CD8-positive, alpha-beta T cell (primary cell): ENCODE measurements at regions of chr10 and their contacts with region 1.

Region 1: DNA sequence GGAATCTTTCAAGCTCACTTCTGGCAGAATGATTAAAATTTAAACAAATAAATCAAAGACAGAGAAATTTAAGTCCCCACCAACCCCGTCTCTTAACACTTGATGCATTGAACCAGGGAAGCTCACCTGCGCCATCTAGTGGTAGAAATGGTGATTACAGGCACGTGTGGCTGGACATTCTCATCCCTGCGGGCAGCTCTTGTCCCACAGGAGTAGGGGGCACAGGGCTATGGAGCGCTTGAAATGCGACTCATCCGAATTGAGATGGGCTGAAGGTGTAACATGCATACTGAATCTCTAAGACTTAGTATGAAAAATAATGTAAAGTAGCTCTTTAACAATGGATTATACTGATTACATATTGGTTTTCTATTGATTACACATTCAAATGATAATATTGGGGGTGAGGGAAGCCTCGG is 24.8 kb upstream of the SLIT1 start:
- DNase-seq: peak; percentile 47 to 82 (median 71)
- ATAC-seq: peak; percentile 52
- H3K4me3 ChIP-seq: no peak overlapping the region
- H3K4me3 Mint-ChIP-seq: no peak overlapping the region
- H3K27ac ChIP-seq: no peak overlapping the region
- H3K27ac Mint-ChIP-seq: no peak overlapping the region
- H3K4me1 ChIP-seq: no peaks in the 10 kb centered on the region
- H3K4me1 Mint-ChIP-seq: no peaks in the 10 kb centered on the region
- H3K27me3 ChIP-seq: no peaks in the 10 kb centered on the region
- H3K27me3 Mint-ChIP-seq: peaks cover 1% of the 10 kb centered on the region
- CTCF ChIP-seq: peak; percentile 98

Region 2: DNA sequence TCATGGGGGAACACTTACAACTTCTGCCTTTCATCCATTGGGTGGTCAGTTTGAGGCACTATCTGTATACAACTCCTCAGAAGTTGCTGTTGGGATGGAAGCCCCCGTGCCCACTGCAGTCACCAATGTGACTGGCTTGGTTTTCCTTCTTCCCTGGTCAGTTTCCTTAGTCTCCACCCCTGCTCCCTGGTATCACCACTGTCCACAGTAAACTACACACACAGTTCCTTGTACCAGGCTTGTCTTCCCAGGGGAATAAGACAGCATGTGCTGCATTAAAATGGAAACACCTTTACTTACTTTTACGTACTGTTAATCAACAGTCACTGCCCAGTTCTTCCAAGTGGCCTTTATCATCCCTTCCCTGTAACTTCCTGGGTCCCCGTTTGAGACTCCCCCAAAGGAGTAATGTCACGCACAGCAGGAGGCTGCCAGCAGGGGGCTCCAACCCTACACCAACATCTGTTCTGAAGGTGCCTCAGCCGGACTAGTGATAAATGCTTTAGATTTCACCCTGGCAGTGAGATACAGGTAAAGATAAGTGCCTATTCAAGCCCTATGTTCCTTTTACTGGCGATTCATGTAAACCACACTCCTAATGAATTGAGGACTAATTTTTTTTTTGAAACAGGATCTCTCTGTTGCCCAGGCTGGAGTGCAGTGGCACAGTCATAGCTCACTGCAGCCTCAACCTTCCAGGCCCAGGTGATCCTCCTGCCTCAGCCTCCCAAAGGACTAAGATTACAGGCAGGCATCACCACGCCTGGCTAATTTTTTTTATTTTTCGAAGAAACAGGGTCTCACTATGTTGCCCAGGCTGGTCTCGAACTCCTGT is 444.9 kb before region 1 on chr10:
- CTCF ChIA-PET with region 1: interaction called, 5 read pairs
- POLR2A ChIA-PET with region 1: no interaction called
- intact Hi-C with region 1: loop called (anchors 1 to 10 kb)
- DNase-seq: peak; percentile 53 to 83 (median 78)
- ATAC-seq: peak; percentile 94
- H3K4me3 ChIP-seq: no peak overlapping the region
- H3K4me3 Mint-ChIP-seq: no peak overlapping the region
- H3K27ac ChIP-seq: no peak overlapping the region
- H3K27ac Mint-ChIP-seq: no peak overlapping the region
- H3K4me1 ChIP-seq: no peaks in the 10 kb centered on the region
- H3K4me1 Mint-ChIP-seq: no peaks in the 10 kb centered on the region
- H3K27me3 ChIP-seq: no peaks in the 10 kb centered on the region
- H3K27me3 Mint-ChIP-seq: no peaks in the 10 kb centered on the region
- CTCF ChIP-seq: peak; percentile 78

Region 3: DNA sequence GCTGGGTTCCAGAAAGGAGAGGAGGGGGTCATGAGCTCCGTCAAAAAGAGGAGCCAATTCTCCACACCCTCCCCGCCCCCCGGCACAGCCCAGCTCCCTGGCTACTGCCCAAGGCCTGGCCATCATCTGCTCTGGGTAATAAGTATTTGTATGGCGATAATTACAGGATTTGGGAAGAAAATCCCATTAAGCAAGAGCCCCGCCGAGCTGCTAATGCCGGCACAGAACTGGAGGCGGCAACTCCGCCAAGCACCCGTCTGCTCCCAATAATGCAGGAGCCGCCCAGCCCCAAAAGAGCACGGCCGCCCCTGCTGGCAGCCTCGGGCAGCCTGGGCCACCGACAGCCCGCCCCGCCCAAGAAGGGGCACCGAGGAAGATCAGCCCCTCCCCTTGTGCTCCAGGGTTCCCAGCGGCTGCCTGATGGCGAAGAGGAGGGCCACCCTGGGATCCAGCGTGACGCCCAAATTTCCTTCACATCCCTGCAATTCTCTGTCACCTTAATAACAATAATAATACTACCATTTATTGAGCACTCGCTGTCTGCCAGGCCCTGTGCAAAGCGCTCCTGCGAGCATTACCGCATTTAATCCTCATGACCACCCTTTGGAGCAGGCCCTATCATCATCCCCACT is 30.7 kb before region 1 on chr10:
- CTCF ChIA-PET with region 1: interaction called, 10 read pairs
- POLR2A ChIA-PET with region 1: no interaction called
- intact Hi-C with region 1: no loop called
- DNase-seq: no peak
- ATAC-seq: no peak
- H3K4me3 ChIP-seq: no peak overlapping the region
- H3K4me3 Mint-ChIP-seq: no peak overlapping the region
- H3K27ac ChIP-seq: no peak overlapping the region
- H3K27ac Mint-ChIP-seq: no peak overlapping the region
- H3K4me1 ChIP-seq: no peaks in the 10 kb centered on the region
- H3K4me1 Mint-ChIP-seq: peaks cover 6% of the 10 kb centered on the region
- H3K27me3 ChIP-seq: peaks cover 0 to 2% of the 10 kb centered on the region in 2 experiments
- H3K27me3 Mint-ChIP-seq: peaks cover 36% of the 10 kb centered on the region
- CTCF ChIP-seq: no peak

Region 4: DNA sequence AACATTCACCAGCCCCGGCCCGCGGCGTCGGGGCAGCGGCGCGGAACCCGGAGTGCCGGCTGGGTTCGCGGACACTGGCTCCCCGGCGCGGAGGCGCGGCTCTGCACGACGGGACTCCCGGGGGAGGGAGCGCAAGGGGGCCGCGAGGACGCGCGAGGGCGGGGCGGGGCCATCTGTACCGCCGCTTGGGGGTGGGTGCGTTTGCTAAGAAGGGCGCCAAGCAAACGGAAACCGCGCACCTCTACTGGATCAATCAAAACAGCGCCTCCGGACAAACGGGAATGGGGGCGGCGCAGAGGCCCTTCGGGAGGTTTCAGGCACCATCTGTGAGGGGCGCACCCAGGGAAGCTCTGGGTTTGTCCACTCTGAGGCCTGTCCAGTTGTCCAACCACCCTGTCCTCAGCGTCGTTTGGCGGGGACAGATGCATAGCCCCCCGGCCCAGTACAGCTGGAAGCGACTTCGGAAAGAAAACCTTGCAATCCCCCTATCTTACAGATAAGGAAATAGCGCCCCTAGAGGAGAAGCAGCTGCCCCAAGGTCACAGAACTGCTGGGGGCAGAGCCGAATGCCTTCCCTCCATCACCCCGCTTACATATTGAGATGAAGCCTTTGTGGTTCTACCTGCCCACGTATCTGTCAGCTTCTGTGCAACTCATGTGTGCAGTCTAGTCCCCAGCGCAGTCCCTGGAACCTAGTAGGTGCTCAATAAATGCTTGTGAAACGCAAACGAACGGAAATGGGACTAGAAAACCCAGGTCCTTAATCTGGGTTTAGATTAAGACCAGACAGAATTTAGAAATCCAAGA is 14.1 kb before region 1 on chr10:
- CTCF ChIA-PET with region 1: interaction called, 127 read pairs
- POLR2A ChIA-PET with region 1: interaction called, 3 read pairs
- intact Hi-C with region 1: no loop called
- DNase-seq: peak; percentile 23 to 83 (median 67)
- ATAC-seq: peak; percentile 92
- H3K4me3 ChIP-seq: peak overlapping the region; percentile 62 to 86
- H3K4me3 Mint-ChIP-seq: peak overlapping the region; percentile 85
- H3K27ac ChIP-seq: no peak overlapping the region
- H3K27ac Mint-ChIP-seq: peak overlapping the region; percentile 22
- H3K4me1 ChIP-seq: peaks cover 7% of the 10 kb centered on the region
- H3K4me1 Mint-ChIP-seq: peaks cover 9% of the 10 kb centered on the region
- H3K27me3 ChIP-seq: peaks cover 0 to 4% of the 10 kb centered on the region in 2 experiments
- H3K27me3 Mint-ChIP-seq: peaks cover 12% of the 10 kb centered on the region
- CTCF ChIP-seq: peak; percentile 80

Region 5: GRCh38 chr10:97234400-97234799 is 23.8 kb after region 1 on chr10:
- CTCF ChIA-PET with region 1: interaction called, 22 read pairs
- POLR2A ChIA-PET with region 1: no interaction called
- intact Hi-C with region 1: no loop called
- DNase-seq: peak in 2 of 9 experiments; percentile 17 to 33
- ATAC-seq: no peak
- H3K4me3 ChIP-seq: no peak overlapping the region
- H3K4me3 Mint-ChIP-seq: no peak overlapping the region
- H3K27ac ChIP-seq: no peak overlapping the region
- H3K27ac Mint-ChIP-seq: no peak overlapping the region
- H3K4me1 ChIP-seq: no peaks in the 10 kb centered on the region
- H3K4me1 Mint-ChIP-seq: no peaks in the 10 kb centered on the region
- H3K27me3 ChIP-seq: no peaks in the 10 kb centered on the region
- H3K27me3 Mint-ChIP-seq: no peaks in the 10 kb centered on the region
- CTCF ChIP-seq: peak; percentile 45